Mammary epithelial cell (primary cell): ENCODE measurements at regions of chr4 and their contacts with region 1.

Region 1: DNA sequence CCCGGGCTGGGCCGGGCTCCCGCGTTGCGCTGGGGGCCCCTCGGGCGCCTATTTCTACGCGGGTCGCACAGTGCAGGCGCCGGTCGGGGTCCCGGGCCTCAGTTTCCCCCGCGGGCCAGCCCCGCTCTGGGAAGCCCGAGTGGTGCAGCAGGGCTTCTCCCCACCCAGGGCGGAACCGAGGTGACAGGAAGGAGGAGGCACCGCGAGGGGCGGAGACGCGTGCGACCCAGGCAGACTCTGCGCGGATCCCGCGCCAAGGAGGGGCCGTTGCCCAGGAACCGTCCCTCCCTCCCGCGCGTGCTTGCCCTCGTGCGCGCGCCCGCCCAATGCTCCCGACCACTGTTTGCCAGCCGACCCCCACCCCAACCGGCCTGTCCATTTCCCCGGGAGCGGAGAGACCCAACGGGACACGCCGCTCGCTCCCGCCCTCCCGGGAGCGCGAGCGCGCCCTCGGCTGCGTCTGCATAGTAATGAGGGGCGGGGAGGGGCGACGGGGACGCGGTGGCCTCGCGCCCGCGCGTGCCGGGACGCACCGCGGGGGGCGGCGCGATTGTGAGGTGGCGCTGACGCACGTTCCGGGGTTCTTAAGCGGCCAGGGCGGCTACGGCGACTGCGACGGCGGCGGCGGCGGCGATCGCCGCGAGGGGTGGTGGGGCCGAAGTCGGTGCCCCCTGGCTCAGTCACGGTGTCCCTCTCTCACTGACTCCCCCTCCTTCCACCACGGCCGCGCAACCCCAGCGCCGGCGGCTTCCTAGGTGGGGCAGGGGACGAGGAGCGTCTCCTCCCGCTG is at the start of gene CPEB2:
- DNase-seq: peak; percentile 94
- H3K4me3 ChIP-seq: peak within 1 kb of the TSS; percentile 63 to 98 (median 72)
- H3K27ac ChIP-seq: peak within 1 kb of the TSS; percentile 89
- H3K4me1 ChIP-seq: peaks cover 3% of the 10 kb centered on the region
- H3K27me3 ChIP-seq: no peaks in the 10 kb centered on the region
- CTCF ChIP-seq: no peak
- total RNA-seq, gene CPEB2: 16.1 to 21.5 TPM

Region 2: GRCh38 chr4:13484122-13484748 is 1517.8 kb before region 1 on chr4 and contains the start of gene RAB28:
- CTCF ChIA-PET with region 1: no interaction called
- dilution Hi-C with region 1: no loop called
- in situ Hi-C with region 1: no loop called
- intact Hi-C with region 1: loop called (anchors 5 kb)
- DNase-seq: peak; percentile 91
- H3K4me3 ChIP-seq: peak within 1 kb of the TSS; percentile 87 to 93 (median 91)
- H3K27ac ChIP-seq: peak within 1 kb of the TSS; percentile 100
- H3K4me1 ChIP-seq: peaks cover 19% of the 10 kb centered on the region
- H3K27me3 ChIP-seq: no peaks in the 10 kb centered on the region
- CTCF ChIP-seq: no peak
- total RNA-seq, gene RAB28: 13.0 to 20.0 TPM

Region 3: DNA sequence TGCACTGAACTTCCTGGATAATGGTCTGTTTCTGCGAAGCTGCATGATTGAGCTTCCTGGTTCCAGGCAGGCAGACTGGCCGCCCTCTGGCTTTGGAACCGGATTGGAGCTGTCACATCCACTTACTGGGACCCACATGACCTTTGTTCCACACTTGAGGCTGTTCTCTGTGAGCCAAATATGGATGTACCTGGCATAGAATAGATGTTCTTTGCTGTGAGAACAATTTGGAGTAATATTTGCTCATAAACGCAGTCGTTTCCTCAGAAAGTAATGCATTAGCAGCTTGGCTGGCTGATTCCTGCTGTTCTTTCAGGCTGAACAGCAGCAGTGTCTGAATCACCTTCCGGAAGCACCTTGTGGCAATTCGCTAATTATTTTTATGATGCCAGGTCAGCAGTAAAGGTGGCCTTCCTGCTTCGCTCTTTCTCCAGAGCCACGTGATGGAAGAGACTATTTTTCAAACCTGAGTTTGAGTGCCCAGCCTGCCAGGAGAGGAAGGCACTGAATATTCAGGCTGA is 1296.5 kb before region 1 on chr4:
- CTCF ChIA-PET with region 1: no interaction called
- dilution Hi-C with region 1: no loop called
- in situ Hi-C with region 1: no loop called
- intact Hi-C with region 1: loop called (anchors 10 kb)
- DNase-seq: peak; percentile 81
- H3K4me3 ChIP-seq: peak overlapping the region in 1 of 3 experiments; percentile 28
- H3K27ac ChIP-seq: peak overlapping the region; percentile 91
- H3K4me1 ChIP-seq: peaks cover 51% of the 10 kb centered on the region
- H3K27me3 ChIP-seq: no peaks in the 10 kb centered on the region
- CTCF ChIP-seq: no peak

Region 4: DNA sequence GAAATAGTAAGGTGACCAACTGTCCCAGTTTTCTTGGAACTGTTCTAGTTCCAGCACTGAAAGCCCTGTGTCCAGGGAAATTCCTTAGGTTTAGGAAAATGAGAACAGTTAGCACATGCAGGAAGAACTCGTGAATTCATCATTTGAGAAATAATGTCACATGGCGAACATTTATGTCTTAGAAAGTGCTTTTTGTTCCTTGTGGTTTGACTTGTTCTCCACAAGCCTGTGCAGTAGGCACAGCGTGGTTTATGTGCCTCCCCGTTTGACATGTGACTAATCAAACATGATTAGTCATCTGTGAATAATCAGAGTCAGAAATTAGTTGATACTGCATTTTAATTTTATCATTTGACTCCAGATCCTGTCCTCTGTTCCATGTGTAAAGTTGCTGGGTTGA is 555.8 kb before region 1 on chr4:
- CTCF ChIA-PET with region 1: no interaction called
- dilution Hi-C with region 1: no loop called
- in situ Hi-C with region 1: no loop called
- intact Hi-C with region 1: loop called (anchors 5 kb)
- DNase-seq: peak; percentile 91
- H3K4me3 ChIP-seq: peak overlapping the region in 1 of 3 experiments; percentile 14
- H3K27ac ChIP-seq: peak overlapping the region; percentile 86
- H3K4me1 ChIP-seq: peaks cover 20% of the 10 kb centered on the region
- H3K27me3 ChIP-seq: no peaks in the 10 kb centered on the region
- CTCF ChIP-seq: no peak

Region 5: DNA sequence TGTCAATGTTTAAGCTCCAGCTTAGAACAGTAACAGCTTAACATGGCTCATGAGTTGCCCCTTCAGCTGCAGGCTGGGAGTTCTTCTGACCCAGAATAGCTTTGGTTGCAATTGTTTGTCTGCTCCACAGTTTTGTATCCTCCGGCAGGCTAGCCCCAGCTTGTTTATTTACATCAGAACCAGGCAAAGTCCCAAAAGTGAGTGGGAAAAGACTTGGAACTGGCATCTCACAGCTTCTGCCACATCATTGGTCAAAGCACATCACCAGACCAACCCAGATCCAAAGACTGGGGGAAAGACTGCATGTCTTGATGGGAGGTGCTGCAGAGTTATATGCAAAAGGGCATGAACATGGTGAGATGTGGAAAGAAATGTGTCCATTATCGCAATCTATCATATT is 231.0 kb before region 1 on chr4:
- CTCF ChIA-PET with region 1: no interaction called
- dilution Hi-C with region 1: no loop called
- in situ Hi-C with region 1: no loop called
- intact Hi-C with region 1: loop called (anchors 5 kb)
- DNase-seq: peak; percentile 61
- H3K4me3 ChIP-seq: no peak overlapping the region
- H3K27ac ChIP-seq: peak overlapping the region; percentile 37
- H3K4me1 ChIP-seq: peaks cover 11% of the 10 kb centered on the region
- H3K27me3 ChIP-seq: no peaks in the 10 kb centered on the region
- CTCF ChIP-seq: no peak

Region 6: GRCh38 chr4:14871676-14872430 is 130.2 kb before region 1 on chr4:
- CTCF ChIA-PET with region 1: no interaction called
- dilution Hi-C with region 1: no loop called
- in situ Hi-C with region 1: loop called in 1 of 2 experiments (anchors 10 kb)
- intact Hi-C with region 1: loop called (anchors 1 kb)
- DNase-seq: peak; percentile 92
- H3K4me3 ChIP-seq: no peak overlapping the region
- H3K27ac ChIP-seq: no peak overlapping the region
- H3K4me1 ChIP-seq: peaks cover 13% of the 10 kb centered on the region
- H3K27me3 ChIP-seq: no peaks in the 10 kb centered on the region
- CTCF ChIP-seq: peak; percentile 48 to 59

Region 7: GRCh38 chr4:15162465-15163283 is 160.6 kb after region 1 on chr4:
- CTCF ChIA-PET with region 1: no interaction called
- dilution Hi-C with region 1: no loop called
- in situ Hi-C with region 1: no loop called
- intact Hi-C with region 1: loop called (anchors 1 kb)
- DNase-seq: no peak
- H3K4me3 ChIP-seq: no peak overlapping the region
- H3K27ac ChIP-seq: no peak overlapping the region
- H3K4me1 ChIP-seq: no peaks in the 10 kb centered on the region
- H3K27me3 ChIP-seq: peaks cover 3% of the 10 kb centered on the region
- CTCF ChIP-seq: peak; percentile 23 to 53